Activated B cell treated with CpG ODN at 0.5 μM for 24 hours (primary cell): ENCODE measurements at regions of chr3 and their contacts with region 1.

Region 1: GRCh38 chr3:159988617-159989271 is at the start of gene IL12A:
- DNase-seq: peak; percentile 90
- ATAC-seq: peak; percentile 94
- H3K4me3 Mint-ChIP-seq: peak within 1 kb of the TSS; percentile 90
- H3K27ac Mint-ChIP-seq: peak within 1 kb of the TSS; percentile 80
- H3K4me1 Mint-ChIP-seq: peaks cover 53% of the 10 kb centered on the region
- H3K27me3 Mint-ChIP-seq: no peaks in the 10 kb centered on the region
- CTCF ChIP-seq: peak; percentile 90
- total RNA-seq, gene IL12A: 7.0 and 7.8 TPM in 2 replicates

Region 2: DNA sequence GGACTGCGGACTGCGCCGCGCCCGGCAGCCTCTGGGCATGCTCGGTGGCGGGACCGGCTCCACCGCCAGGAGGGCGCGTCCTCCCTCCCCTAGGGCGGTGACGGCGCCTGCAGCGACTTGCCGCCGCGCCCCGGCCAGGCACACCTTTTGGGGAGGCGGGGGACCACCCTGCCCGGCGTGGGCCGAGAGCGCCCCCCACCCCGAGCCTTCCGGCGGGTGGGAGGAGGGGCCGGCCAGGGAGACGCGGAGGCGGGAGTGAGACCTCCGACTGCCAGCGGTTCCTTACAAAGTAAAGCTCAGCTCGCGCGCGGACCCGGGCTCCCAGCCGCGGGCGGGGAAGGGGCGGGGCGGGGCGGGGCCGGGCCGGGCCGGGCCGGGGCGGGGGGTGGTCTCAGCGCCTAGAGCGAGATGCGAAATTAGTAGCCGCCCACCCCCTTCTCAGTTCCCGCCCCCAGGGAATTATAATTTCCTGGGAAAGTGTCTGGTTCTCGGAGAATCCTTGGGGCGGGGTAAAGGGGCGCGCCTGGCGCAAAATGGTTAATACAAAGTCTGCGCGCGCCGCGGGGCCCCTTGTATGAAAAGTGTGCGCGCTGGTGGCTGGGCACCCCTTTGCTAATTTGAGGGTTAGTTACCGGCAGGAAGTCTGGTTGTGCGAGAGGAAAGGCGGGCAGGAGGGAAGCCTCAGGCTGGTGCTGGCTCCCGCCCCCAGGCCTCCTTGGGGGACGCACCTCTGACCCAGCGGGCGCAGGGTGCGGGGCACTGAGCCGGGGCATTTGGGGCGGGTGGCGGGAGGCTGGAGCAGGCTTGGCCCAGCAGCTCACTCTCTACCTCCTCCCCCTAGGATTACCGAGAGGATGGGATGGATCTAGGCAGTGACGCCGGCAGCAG is 224.9 kb before region 1 on chr3:
- CTCF ChIA-PET with region 1: no interaction called
- POLR2A ChIA-PET with region 1: no interaction called
- intact Hi-C with region 1: loop called (anchors 5 kb)
- DNase-seq: peak; percentile 45
- ATAC-seq: peak; percentile 75
- H3K4me3 Mint-ChIP-seq: peak overlapping the region; percentile 90
- H3K27ac Mint-ChIP-seq: no peak overlapping the region
- H3K4me1 Mint-ChIP-seq: peaks cover 21% of the 10 kb centered on the region
- H3K27me3 Mint-ChIP-seq: peaks cover 32% of the 10 kb centered on the region
- CTCF ChIP-seq: no peak

Region 3: DNA sequence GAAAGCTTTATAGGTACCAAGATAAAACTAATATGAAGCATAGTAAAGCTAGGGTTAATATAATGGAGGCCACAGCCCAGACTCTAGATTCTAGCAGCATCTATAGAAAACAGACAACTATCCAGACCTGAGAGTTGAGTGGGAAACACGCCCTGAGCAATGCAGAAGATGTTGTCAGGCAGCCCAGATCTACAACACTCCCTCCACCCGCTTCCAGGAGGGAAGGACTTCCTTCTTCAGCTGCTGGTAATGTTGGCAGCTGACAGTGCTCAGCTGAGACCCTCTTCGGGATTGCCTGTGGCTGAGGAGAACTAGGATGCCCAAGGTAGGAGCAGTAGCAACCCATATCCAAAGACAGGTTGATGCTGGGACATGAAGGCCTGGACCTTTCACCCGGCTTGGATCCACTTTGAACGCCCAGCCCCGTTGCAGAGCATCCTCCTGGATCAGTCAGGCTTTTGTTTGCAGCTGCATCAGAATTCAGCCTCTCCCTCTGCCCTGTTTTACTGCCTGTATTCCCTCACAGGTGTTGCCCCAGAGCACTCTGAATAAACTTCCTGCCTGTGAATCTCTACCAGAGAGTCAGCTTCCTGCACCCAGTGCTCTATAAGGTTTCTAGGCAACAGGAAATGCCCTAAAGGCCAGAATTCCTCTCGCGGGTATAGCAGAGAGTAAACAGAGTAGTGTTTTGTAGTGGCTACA is 174.8 kb before region 1 on chr3:
- CTCF ChIA-PET with region 1: no interaction called
- POLR2A ChIA-PET with region 1: no interaction called
- intact Hi-C with region 1: no loop called
- DNase-seq: no peak
- ATAC-seq: no peak
- H3K4me3 Mint-ChIP-seq: no peak overlapping the region
- H3K27ac Mint-ChIP-seq: no peak overlapping the region
- H3K4me1 Mint-ChIP-seq: no peaks in the 10 kb centered on the region
- H3K27me3 Mint-ChIP-seq: peaks cover 3% of the 10 kb centered on the region
- CTCF ChIP-seq: no peak

Region 4: GRCh38 chr3:159922861-159923312 is 65.9 kb before region 1 on chr3:
- CTCF ChIA-PET with region 1: interaction called, 14 read pairs
- POLR2A ChIA-PET with region 1: interaction called, 11 read pairs
- intact Hi-C with region 1: loop called (anchors 1 kb)
- DNase-seq: peak; percentile 29
- ATAC-seq: peak; percentile 98
- H3K4me3 Mint-ChIP-seq: peak overlapping the region; percentile 42
- H3K27ac Mint-ChIP-seq: peak overlapping the region; percentile 59
- H3K4me1 Mint-ChIP-seq: peaks cover 38% of the 10 kb centered on the region
- H3K27me3 Mint-ChIP-seq: no peaks in the 10 kb centered on the region
- CTCF ChIP-seq: no peak

Region 5: DNA sequence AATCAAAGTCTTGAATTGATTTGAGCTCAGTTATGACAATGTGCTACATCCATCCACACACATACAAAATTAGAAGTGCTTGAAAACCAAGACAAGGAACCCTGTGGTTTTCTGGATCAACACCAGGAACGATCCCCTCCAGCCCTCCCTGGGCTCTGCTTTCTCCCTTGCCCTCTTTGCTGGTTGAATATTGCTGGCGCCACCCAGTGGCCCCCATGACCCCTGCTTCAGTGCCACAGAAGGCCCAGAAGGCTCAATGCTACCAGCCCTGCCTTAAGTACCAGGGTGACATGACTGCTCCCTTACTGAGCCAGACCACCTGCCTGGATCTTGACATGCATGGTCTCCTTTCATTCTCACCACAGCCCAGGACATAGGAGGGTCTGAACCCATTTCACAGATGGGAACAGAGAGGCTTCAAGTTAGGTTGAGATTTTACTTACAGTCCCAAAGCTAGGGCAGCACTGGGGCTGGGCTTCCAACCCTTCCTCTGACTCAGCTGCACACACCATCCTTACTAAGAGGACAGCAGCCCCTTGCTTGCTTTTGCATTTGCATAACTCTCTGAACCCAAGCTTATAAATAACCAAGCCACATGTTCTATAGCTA is 14.9 kb after region 1 on chr3:
- CTCF ChIA-PET with region 1: interaction called, 91 read pairs
- POLR2A ChIA-PET with region 1: interaction called, 6 read pairs
- intact Hi-C with region 1: loop called (anchors 1 kb)
- DNase-seq: peak; percentile 38
- ATAC-seq: peak; percentile 92
- H3K4me3 Mint-ChIP-seq: no peak overlapping the region
- H3K27ac Mint-ChIP-seq: no peak overlapping the region
- H3K4me1 Mint-ChIP-seq: peaks cover 10% of the 10 kb centered on the region
- H3K27me3 Mint-ChIP-seq: no peaks in the 10 kb centered on the region
- CTCF ChIP-seq: no peak

Region 6: GRCh38 chr3:160343132-160343531 is 354.4 kb after region 1 on chr3:
- CTCF ChIA-PET with region 1: no interaction called
- POLR2A ChIA-PET with region 1: no interaction called
- intact Hi-C with region 1: loop called (anchors 1 kb)
- DNase-seq: no peak
- ATAC-seq: no peak
- H3K4me3 Mint-ChIP-seq: no peak overlapping the region
- H3K27ac Mint-ChIP-seq: no peak overlapping the region
- H3K4me1 Mint-ChIP-seq: no peaks in the 10 kb centered on the region
- H3K27me3 Mint-ChIP-seq: no peaks in the 10 kb centered on the region
- CTCF ChIP-seq: no peak

Region 7: GRCh38 chr3:160449636-160450598 is 461.2 kb after region 1 on chr3 and contains the start of gene TRIM59:
- CTCF ChIA-PET with region 1: no interaction called
- POLR2A ChIA-PET with region 1: no interaction called
- intact Hi-C with region 1: loop called (anchors 1 kb)
- DNase-seq: peak; percentile 92
- ATAC-seq: peak; percentile 96
- H3K4me3 Mint-ChIP-seq: peak within 1 kb of the TSS; percentile 94
- H3K27ac Mint-ChIP-seq: peak within 1 kb of the TSS; percentile 90
- H3K4me1 Mint-ChIP-seq: peaks cover 33% of the 10 kb centered on the region
- H3K27me3 Mint-ChIP-seq: no peaks in the 10 kb centered on the region
- CTCF ChIP-seq: no peak
- total RNA-seq, gene TRIM59: 23.4 TPM in 2 replicates